ENCODE measurements at regions of chr1 and their contacts with region 1.

Region 1: GRCh38 chr1:185156854-185157598 is at the starts of genes SWT1 and TRMT1L:
- DNase-seq: peak; percentile 98
- H3K4me3 Mint-ChIP-seq: peak within 1 kb of the TSS; percentile 98
- H3K27ac Mint-ChIP-seq: peak within 1 kb of the TSS; percentile 97
- H3K4me1 Mint-ChIP-seq: peaks cover 59% of the 10 kb centered on the region
- H3K27me3 Mint-ChIP-seq: no peaks in the 10 kb centered on the region
- total RNA-seq, gene SWT1: 1.3 and 2.3 TPM in 2 replicates
- total RNA-seq, gene TRMT1L: 16.7 and 21.9 TPM in 2 replicates

Region 2: GRCh38 chr1:183635606-183636333 is 1521.3 kb before region 1 on chr1 and contains the start of gene ARPC5:
- intact Hi-C with region 1: loop called (anchors 5 kb)
- DNase-seq: peak; percentile 96
- H3K4me3 Mint-ChIP-seq: peak within 1 kb of the TSS; percentile 100
- H3K27ac Mint-ChIP-seq: peak within 1 kb of the TSS; percentile 100
- H3K4me1 Mint-ChIP-seq: peaks cover 46% of the 10 kb centered on the region
- H3K27me3 Mint-ChIP-seq: peaks cover 4% of the 10 kb centered on the region
- total RNA-seq, gene ARPC5: 146 and 154 TPM in 2 replicates

Region 3: DNA sequence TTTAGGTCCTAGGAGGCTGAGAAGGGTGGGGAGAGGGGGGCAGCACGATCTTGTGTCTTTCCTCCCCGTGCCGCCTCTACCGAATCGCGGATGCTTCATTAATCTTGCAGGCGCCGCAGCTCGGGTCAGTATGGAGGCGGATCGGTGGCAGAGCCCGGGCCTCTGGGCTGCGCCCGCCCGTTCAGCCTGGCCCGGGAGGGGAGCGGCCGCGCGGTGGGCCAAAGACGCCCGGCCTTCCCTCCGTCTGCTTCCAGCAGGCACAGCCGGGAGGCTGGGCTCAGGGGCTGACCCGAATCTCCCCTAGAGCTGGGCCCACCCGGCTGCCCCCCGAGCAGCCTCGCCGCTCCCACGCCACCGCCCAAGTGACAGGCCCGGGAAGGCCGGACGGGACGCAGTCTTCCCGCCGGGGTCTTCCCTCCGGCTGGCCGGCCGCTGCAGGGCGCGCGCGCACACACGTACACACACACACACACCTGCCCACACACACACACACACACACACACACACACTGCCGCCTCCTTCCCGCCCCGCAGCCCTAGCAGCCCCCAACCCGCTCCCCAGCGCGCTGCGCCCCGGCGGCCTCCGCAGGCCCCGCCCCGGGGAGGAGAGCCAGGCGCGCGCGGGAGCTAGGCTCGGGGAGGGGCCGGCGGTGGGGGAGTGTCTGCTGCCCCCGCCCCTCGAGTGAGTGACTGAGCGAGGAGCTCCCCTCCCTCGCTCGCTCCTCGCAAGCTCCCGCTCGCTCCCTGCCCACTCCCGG is 770.5 kb before region 1 on chr1 and contains the start of gene C1orf21:
- intact Hi-C with region 1: loop called (anchors 2 kb)
- DNase-seq: peak; percentile 75
- H3K4me3 Mint-ChIP-seq: peak within 1 kb of the TSS; percentile 86
- H3K27ac Mint-ChIP-seq: peak within 1 kb of the TSS; percentile 53
- H3K4me1 Mint-ChIP-seq: peaks cover 12% of the 10 kb centered on the region
- H3K27me3 Mint-ChIP-seq: peaks cover 71% of the 10 kb centered on the region
- total RNA-seq, gene C1orf21: 1.8 and 4.1 TPM in 2 replicates

Region 4: GRCh38 chr1:184866991-184867788 is 289.8 kb before region 1 on chr1:
- intact Hi-C with region 1: loop called (anchors 5 kb)
- DNase-seq: peak; percentile 44
- H3K4me3 Mint-ChIP-seq: peak overlapping the region; percentile 38
- H3K27ac Mint-ChIP-seq: peak overlapping the region; percentile 90
- H3K4me1 Mint-ChIP-seq: peaks cover 40% of the 10 kb centered on the region
- H3K27me3 Mint-ChIP-seq: no peaks in the 10 kb centered on the region

Region 5: GRCh38 chr1:185044981-185045813 is 111.8 kb before region 1 on chr1 and contains the start of gene RNF2:
- intact Hi-C with region 1: loop called (anchors 1 kb)
- DNase-seq: peak; percentile 65
- H3K4me3 Mint-ChIP-seq: peak within 1 kb of the TSS; percentile 89
- H3K27ac Mint-ChIP-seq: peak within 1 kb of the TSS; percentile 82
- H3K4me1 Mint-ChIP-seq: peaks cover 29% of the 10 kb centered on the region
- H3K27me3 Mint-ChIP-seq: peaks cover 15% of the 10 kb centered on the region
- total RNA-seq, gene RNF2: 24.1 and 24.4 TPM in 2 replicates

Region 6: DNA sequence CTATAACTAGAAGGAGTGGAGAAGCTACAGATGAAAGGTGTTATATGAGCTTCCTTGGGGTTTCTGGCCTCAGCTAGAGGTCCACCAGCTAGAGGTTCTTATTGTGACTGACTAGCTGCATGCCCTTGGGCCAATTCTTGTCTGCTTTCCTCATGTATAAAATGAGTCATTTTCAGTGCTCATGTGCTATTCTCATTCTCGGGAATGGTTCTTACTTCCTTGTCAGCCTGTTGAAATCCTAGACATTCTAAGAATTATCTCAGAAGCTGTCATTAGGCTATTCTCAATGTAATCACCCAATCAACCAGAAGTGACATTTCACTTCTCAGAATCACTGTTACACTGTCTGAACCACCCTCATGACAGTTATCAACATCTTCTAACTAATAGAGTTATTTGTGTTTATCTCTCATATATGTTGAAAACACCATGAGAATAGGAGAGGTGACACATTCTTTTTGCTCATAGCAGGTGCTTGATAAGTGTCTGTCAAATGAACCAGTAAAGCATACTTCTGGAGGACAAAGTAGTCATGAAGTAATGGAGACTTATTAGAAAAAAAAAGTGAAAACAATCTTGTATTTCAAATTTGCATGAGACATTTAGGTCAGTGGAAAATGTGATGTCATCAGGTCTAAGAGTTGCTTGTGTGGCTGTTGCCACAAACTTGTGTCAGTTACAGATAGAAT is 282.8 kb after region 1 on chr1:
- intact Hi-C with region 1: loop called (anchors 5 kb)
- DNase-seq: peak; percentile 44
- H3K4me3 Mint-ChIP-seq: no peak overlapping the region
- H3K27ac Mint-ChIP-seq: no peak overlapping the region
- H3K4me1 Mint-ChIP-seq: peaks cover 27% of the 10 kb centered on the region
- H3K27me3 Mint-ChIP-seq: no peaks in the 10 kb centered on the region

Region 7: GRCh38 chr1:186304982-186305949 is 1148.2 kb after region 1 on chr1:
- intact Hi-C with region 1: loop called (anchors 10 kb)
- DNase-seq: no peak
- H3K4me3 Mint-ChIP-seq: peak overlapping the region; percentile 48
- H3K27ac Mint-ChIP-seq: peak overlapping the region; percentile 86
- H3K4me1 Mint-ChIP-seq: peaks cover 58% of the 10 kb centered on the region
- H3K27me3 Mint-ChIP-seq: no peaks in the 10 kb centered on the region

Measured in activated T-helper 1 cell treated with anti-CD3 and anti-CD28 coated beads, Interleukin-12 subunit alpha, Interleukin-12 subunit beta, Interleukin-2, Interleukin-4 antibody, amounts not matched to agents 30 ng/mL and 10 ng/mL and 1 ng/mL, durations not matched to agents 14 hours and 24 hours and 36 hours (primary cell).